Pancreas (tissue), 10 donors: ENCODE measurements at regions of chr9 and their contacts with region 1.

Region 1: DNA sequence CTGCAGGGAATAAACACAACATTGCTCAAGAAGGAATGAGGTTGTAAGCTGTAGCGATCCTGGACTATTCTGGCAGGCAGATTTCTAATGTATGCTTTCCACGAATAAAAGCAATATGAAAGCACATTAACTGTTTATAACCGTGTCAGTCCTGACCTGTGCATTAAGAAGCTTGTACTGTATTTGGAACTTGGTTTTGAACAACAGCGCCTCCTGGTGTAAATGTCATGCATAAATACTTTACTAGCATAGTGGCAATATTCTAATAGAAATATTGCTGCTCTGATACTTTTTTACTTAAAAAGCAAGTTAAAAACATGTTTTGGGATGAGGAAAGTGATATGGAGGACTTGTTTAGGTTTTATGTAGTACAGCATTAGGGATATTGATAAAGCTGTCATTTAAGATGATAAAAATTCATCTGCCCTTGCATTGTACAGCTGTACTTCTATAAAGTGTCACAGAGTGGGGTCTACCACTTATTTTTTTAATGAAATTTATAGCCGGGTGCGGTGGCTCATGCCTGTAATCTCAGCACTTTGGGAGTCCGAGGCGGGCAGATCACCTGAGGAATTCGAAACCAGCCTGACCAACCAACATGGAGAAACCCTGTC is 70.7 kb upstream of the GNE start:
- DNase-seq: peak in 3 of 6 donors; percentile 21 to 34 (median 26)
- ATAC-seq: peak; percentile 66 to 90 (median 84)
- H3K4me3 ChIP-seq: no peak overlapping the region
- H3K27ac ChIP-seq: no peak overlapping the region
- H3K4me1 ChIP-seq: no peaks in the 10 kb centered on the region
- H3K27me3 ChIP-seq: no peaks in the 10 kb centered on the region
- CTCF ChIP-seq: peak; percentile 55 to 64 (median 60)

Region 2: GRCh38 chr9:36250079-36250478 is 78.8 kb before region 1 on chr9:
- intact Hi-C with region 1: loop called in 2 of 3 experiments (anchors 5 to 10 kb)
- DNase-seq: no peak
- ATAC-seq: no peak
- H3K4me3 ChIP-seq: no peak overlapping the region
- H3K27ac ChIP-seq: no peak overlapping the region
- H3K4me1 ChIP-seq: no peaks in the 10 kb centered on the region
- H3K27me3 ChIP-seq: no peaks in the 10 kb centered on the region
- CTCF ChIP-seq: no peak

Region 3: GRCh38 chr9:36400332-36401163 is 71.6 kb after region 1 on chr9:
- intact Hi-C with region 1: no loop called
- DNase-seq: peak; percentile 83 to 96 (median 90)
- ATAC-seq: peak; percentile 87 to 94 (median 90)
- H3K4me3 ChIP-seq: peak overlapping the region; percentile 62 to 89 (median 84)
- H3K27ac ChIP-seq: peak overlapping the region; percentile 84 to 95 (median 94)
- H3K4me1 ChIP-seq: peaks cover 21 to 27% (median 22%) of the 10 kb centered on the region in 3 donors
- H3K27me3 ChIP-seq: no peaks in the 10 kb centered on the region
- CTCF ChIP-seq: no peak